Spleen (tissue), 13 donors: ENCODE measurements at regions of chr1 and their contacts with region 1.

Region 1: DNA sequence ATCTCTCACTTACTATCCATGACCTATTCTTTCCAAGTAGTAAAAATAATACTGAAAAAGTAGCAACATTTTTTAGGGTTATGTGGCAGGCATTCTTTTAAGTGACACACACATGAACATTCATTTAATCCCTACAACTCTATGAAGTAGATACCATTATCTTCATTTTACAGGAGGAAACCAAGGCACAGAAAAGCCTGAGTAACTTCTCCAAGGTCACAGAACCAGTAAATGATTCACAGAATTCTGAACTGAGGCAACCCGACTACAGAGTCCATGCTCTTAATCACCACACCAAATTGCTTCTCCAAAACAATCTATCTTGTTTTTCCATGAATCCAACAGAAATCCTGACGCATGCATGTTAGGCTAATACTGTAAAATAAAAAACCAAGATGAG is 17.5 kb downstream of the FUBP1 start:
- DNase-seq: no peak
- H3K4me3 ChIP-seq: no peak overlapping the region
- H3K27ac ChIP-seq: no peak overlapping the region
- H3K4me1 ChIP-seq: no peaks in the 10 kb centered on the region
- H3K27me3 ChIP-seq: no peaks in the 10 kb centered on the region
- CTCF ChIP-seq: no peak
- POLR2A ChIP-seq: no peak

Region 2: DNA sequence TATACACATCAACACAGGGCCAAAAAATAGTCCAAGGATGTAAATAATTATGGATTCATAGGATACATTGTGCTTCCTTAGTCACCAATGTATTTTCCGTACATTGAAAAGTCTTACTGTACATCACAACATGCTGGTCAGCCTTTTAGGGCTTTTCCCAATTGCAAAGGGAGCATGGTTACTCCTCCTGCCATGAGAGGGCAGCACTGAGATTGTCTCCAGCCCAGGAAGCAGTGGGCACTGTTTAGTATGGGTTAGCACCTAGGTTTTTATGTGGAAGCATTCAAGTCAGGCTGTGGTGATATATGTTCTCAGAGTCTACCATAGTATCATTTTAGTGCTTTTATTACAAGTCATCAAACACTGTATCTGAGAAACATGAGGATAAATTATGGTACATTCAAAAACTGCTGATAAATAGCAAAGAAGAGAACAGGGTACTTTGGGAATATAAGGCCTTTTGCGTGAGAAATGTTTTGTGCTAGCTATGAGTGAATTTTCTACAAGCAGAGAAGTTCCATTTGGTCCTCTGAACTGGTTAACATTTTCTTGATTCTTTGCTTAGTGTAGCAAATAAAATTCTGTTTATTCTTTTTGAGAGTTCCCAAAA is 1060.1 kb before region 1 on chr1:
- intact Hi-C with region 1: no loop called
- DNase-seq: no peak
- H3K4me3 ChIP-seq: no peak overlapping the region
- H3K27ac ChIP-seq: no peak overlapping the region
- H3K4me1 ChIP-seq: no peaks in the 10 kb centered on the region
- H3K27me3 ChIP-seq: no peaks in the 10 kb centered on the region
- CTCF ChIP-seq: peak in 6 of 11 experiments; percentile 13 to 63 (median 50)
- POLR2A ChIP-seq: no peak

Region 3: DNA sequence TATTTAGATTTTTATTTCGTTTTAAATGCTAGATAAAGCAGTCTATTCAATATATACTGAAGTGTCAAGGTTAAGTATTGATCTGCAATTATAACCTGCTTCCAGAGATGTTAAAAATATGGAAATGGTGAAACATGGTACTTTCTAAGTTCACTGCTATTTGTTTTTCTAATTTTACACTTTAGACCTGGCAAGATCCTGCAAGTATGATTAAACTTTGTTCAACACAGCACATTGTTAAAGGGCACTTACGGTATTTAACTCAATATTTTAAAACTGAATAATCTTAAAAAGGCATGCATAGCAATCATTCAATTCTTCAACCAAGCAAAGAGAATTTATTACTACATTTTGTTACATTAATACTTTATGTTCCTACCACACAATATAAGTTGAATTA is 243.2 kb before region 1 on chr1:
- intact Hi-C with region 1: loop called (anchors 10 kb)
- DNase-seq: no peak
- H3K4me3 ChIP-seq: no peak overlapping the region
- H3K27ac ChIP-seq: no peak overlapping the region
- H3K4me1 ChIP-seq: no peaks in the 10 kb centered on the region
- H3K27me3 ChIP-seq: no peaks in the 10 kb centered on the region
- CTCF ChIP-seq: no peak
- POLR2A ChIP-seq: no peak

Region 4: GRCh38 chr1:78121710-78122109 is 160.3 kb after region 1 on chr1:
- intact Hi-C with region 1: loop called (anchors 5 kb)
- DNase-seq: no peak
- H3K4me3 ChIP-seq: no peak overlapping the region
- H3K27ac ChIP-seq: no peak overlapping the region
- H3K4me1 ChIP-seq: no peaks in the 10 kb centered on the region
- H3K27me3 ChIP-seq: no peaks in the 10 kb centered on the region
- CTCF ChIP-seq: no peak
- POLR2A ChIP-seq: no peak